Endothelial cell of umbilical vein (primary cell): ENCODE measurements at regions of chr9 and their contacts with region 1.

Region 1: DNA sequence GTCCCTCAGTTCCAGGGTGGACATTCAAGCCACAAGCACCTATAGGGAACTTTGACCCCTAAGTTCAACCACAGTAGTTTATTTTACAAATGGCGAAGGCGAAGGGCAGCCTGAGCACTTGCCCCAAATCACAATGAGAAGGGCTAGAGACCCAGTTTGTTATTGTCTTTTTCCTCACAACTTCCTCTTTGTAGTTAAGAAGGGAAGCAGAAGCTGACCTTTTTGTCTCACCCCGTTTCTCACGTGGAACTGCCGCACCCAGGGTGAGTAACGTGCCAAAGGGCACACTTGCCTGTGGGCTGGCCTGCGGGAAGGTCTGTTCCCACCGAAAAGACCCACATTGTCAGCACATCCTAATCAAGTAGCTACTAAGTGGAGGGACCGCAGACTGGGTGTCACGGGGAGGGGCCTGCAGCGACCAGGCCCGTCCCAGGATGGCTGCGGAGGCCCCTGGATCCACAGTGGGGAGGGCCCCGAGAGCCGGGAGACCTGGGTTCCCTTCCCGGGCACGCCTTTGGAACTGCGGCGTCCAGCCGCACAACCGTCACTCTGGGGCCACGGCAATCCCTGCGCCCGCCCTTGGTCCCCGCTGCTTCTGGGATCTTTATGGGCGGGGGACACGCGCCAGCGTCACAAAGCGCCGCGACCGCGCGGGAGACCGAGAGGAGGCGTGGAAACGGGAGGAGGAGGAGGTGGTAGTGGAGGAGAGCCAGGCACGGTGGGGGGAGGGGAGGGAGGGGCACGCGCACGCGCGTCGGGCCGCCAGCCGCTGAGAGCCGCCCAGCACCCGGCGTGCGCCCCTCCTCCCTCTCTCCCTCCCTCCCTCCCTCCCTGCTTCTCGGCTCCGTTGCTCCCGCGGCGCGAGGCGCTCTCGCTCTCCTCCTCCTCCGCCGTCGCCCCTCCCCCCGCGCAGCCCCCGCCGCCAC is at the start of gene UBE2R2:
- DNase-seq: peak; percentile 93
- H3K4me3 ChIP-seq: peak within 1 kb of the TSS; percentile 67 to 97 (median 83)
- H3K27ac ChIP-seq: peak within 1 kb of the TSS; percentile 95
- H3K4me1 ChIP-seq: peaks cover 42% of the 10 kb centered on the region
- H3K27me3 ChIP-seq: no peaks in the 10 kb centered on the region
- CTCF ChIP-seq: no peak
- POLR2A ChIP-seq: peak; percentile 70
- total RNA-seq, gene UBE2R2: 51.5 and 54.3 TPM in 2 replicates

Region 2: GRCh38 chr9:33737811-33738606 is 78.6 kb before region 1 on chr9:
- CTCF ChIA-PET with region 1: interaction called, 47 read pairs
- POLR2A ChIA-PET with region 1: no interaction called
- dilution Hi-C with region 1: no loop called
- intact Hi-C with region 1: no loop called
- DNase-seq: peak; percentile 62
- H3K4me3 ChIP-seq: no peak overlapping the region
- H3K27ac ChIP-seq: no peak overlapping the region
- H3K4me1 ChIP-seq: no peaks in the 10 kb centered on the region
- H3K27me3 ChIP-seq: no peaks in the 10 kb centered on the region
- CTCF ChIP-seq: peak; percentile 68 to 74
- POLR2A ChIP-seq: no peak

Region 3: GRCh38 chr9:33843312-33843961 is 26.8 kb after region 1 on chr9:
- CTCF ChIA-PET with region 1: interaction called, 15 read pairs
- POLR2A ChIA-PET with region 1: no interaction called
- dilution Hi-C with region 1: no loop called
- intact Hi-C with region 1: no loop called
- DNase-seq: no peak
- H3K4me3 ChIP-seq: no peak overlapping the region
- H3K27ac ChIP-seq: no peak overlapping the region
- H3K4me1 ChIP-seq: peaks cover 3% of the 10 kb centered on the region
- H3K27me3 ChIP-seq: no peaks in the 10 kb centered on the region
- CTCF ChIP-seq: no peak
- POLR2A ChIP-seq: no peak

Region 4: DNA sequence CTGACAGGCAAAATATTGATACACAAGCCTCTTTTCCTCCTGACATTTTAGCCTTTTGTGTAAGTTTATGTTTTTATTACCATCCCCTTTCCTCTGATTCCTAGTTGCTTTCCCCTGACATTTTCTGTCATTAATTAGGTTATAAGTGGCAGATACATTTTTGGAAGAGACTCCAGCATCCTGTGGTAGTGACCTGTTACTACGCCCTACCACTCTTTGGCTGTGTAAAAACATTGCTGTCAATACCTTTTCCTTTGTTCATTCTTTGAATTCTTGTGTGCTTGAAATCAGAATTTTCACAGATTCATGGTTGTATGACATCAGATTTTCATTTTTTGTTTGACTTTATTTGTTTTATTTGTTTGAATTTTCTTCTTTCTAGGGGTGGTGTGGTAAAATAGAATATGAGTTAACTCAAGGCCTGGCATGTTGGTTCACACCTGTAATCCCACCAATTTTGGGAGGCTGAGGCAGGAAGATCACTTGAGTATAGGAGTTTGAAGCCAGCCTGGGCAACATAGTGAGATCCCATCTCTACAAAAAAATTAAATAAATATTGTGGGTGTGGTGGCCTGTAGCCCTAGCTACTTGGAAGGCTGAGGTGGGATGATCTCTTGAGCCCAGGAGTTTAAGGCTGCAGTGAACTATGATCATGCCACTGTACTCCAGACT is 43.7 kb after region 1 on chr9:
- CTCF ChIA-PET with region 1: interaction called, 11 read pairs
- POLR2A ChIA-PET with region 1: no interaction called
- dilution Hi-C with region 1: no loop called
- intact Hi-C with region 1: no loop called
- DNase-seq: no peak
- H3K4me3 ChIP-seq: no peak overlapping the region
- H3K27ac ChIP-seq: peak overlapping the region; percentile 7
- H3K4me1 ChIP-seq: peaks cover 4% of the 10 kb centered on the region
- H3K27me3 ChIP-seq: no peaks in the 10 kb centered on the region
- CTCF ChIP-seq: no peak
- POLR2A ChIP-seq: no peak

Region 5: GRCh38 chr9:33908121-33908520 is 91.5 kb after region 1 on chr9:
- CTCF ChIA-PET with region 1: interaction called, 16 read pairs
- POLR2A ChIA-PET with region 1: no interaction called
- dilution Hi-C with region 1: no loop called
- intact Hi-C with region 1: loop called (anchors 5 kb)
- DNase-seq: no peak
- H3K4me3 ChIP-seq: no peak overlapping the region
- H3K27ac ChIP-seq: no peak overlapping the region
- H3K4me1 ChIP-seq: no peaks in the 10 kb centered on the region
- H3K27me3 ChIP-seq: no peaks in the 10 kb centered on the region
- CTCF ChIP-seq: no peak
- POLR2A ChIP-seq: no peak

Region 6: DNA sequence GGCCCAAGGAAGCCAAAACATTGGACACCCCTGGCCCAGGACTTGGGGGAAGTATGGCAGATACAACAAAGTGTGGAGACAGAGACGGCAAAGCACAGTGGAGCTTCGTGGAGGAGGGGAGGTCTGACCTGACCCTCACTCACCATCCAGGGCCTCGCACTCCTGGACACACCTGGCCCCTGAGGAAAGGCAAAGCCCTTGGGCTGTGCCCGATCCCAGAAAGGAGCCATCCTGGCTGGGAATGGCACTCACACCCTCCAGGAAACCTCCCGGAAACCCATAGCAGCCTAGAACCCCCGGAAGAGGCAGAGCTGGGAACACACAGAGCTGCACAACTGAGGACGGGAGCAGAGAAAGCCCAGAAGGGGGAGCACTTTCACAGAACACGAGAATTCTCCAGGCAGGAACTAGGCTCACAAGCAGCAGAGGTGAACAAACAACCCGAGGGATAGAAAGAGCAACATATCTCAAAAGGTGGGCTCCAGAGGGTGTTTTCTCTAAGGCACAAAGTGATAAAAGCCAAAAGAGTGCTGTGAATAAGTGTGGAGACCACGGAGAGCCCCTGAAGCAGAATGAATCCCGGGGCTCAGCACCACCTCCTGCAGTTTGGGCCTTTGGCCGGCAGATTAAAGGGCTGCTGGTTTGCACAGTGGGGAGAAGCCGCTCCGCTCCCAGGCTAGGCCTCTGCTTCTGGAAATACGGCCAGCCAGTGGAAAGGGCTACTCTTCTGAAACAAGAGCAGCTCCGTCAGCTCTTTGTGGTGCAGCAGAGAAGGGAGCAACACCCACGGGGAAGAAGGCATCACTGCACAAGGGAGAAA is 108.6 kb after region 1 on chr9:
- CTCF ChIA-PET with region 1: interaction called, 30 read pairs
- POLR2A ChIA-PET with region 1: no interaction called
- dilution Hi-C with region 1: no loop called
- intact Hi-C with region 1: loop called (anchors 5 kb)
- DNase-seq: peak; percentile 61
- H3K4me3 ChIP-seq: no peak overlapping the region
- H3K27ac ChIP-seq: no peak overlapping the region
- H3K4me1 ChIP-seq: no peaks in the 10 kb centered on the region
- H3K27me3 ChIP-seq: no peaks in the 10 kb centered on the region
- CTCF ChIP-seq: peak; percentile 70 to 79
- POLR2A ChIP-seq: no peak